ENCODE measurements at regions of chr5 and their contacts with region 1.

Region 1: GRCh38 chr5:38373743-38374142 is 115.4 kb downstream of the EGFLAM start:
- DNase-seq: no peak
- ATAC-seq: no peak

Region 2: GRCh38 chr5:38228914-38229313 is 144.8 kb before region 1 on chr5:
- intact Hi-C with region 1: no loop called
- DNase-seq: no peak
- ATAC-seq: no peak

Region 3: GRCh38 chr5:38265546-38266179 is 108.1 kb before region 1 on chr5:
- intact Hi-C with region 1: loop called (anchors 10 kb)
- DNase-seq: peak; percentile 47
- ATAC-seq: peak; percentile 90

Region 4: DNA sequence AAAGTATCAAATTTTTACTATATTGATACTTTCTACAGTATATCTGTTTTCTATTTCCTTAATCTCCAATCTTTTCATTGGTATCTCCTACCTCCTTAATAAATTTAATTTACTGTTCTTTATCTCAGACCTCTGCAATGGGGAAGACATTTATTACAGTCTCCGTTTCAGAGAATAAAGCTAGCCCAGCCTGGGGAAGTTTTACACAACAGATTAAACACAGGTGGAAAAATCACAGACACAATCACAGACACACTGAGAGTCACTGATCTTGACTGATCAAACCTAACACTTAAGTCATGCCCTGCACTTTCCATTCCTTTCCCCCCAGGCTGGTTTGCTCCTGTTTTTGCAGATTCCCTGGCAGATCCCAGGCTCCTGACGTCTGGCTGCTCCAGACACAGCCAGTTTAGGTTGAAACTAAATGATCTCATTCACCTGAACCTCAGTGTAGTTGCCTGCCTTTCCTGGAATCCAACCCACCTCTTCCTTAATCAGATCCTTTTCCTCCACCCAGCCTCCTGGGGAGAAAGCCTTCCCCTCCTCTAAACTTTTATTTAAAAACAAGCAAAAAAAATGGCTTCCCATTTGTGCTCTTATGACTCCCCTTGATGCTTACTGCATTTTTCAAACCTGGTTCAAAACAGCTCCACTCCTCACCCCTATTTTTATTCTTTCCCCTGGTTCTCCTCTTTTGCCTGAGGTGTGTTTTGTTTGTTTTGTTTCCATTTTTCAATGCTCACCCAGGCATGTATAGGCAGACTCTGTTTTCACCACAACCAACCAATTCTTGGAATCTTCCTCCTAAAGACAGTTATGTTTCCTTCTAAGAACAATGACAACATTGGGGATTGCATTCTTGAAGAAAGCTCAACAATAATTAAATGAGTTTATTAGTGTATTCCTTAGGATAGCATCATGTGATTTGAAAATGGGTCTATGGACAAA is 442.6 kb after region 1 on chr5:
- intact Hi-C with region 1: no loop called
- DNase-seq: no peak
- ATAC-seq: no peak